H1 (cell line): ENCODE measurements at regions of chr16 and their contacts with region 1.

Region 1: GRCh38 chr16:52068447-52069074 is 478.4 kb downstream of the TOX3 start:
- DNase-seq: peak; percentile 3 to 53
- H3K4me3 ChIP-seq: no peak overlapping the region
- H3K27ac ChIP-seq: no peak overlapping the region
- H3K4me1 ChIP-seq: no peaks in the 10 kb centered on the region
- H3K27me3 ChIP-seq: no peaks in the 10 kb centered on the region
- CTCF ChIP-seq: peak; percentile 15 to 66 (median 66)
- EP300 ChIP-seq: 0 out of 3 replicates have a peak, but pooled peaks of 1 of the 2 experiments have one; percentile 26
- POLR2A ChIP-seq: no peak
- RAD21 ChIP-seq: peak; percentile 94

Region 2: GRCh38 chr16:52078716-52079655 is 10.4 kb after region 1 on chr16:
- CTCF ChIA-PET with region 1: interaction called, 11 read pairs
- POLR2A ChIA-PET with region 1: no interaction called
- DNase-seq: no peak
- H3K4me3 ChIP-seq: no peak overlapping the region
- H3K27ac ChIP-seq: no peak overlapping the region
- H3K4me1 ChIP-seq: no peaks in the 10 kb centered on the region
- H3K27me3 ChIP-seq: no peaks in the 10 kb centered on the region
- CTCF ChIP-seq: no peak
- EP300 ChIP-seq: no peak
- POLR2A ChIP-seq: no peak
- RAD21 ChIP-seq: no peak

Region 3: GRCh38 chr16:52191531-52192134 is 123.1 kb after region 1 on chr16:
- CTCF ChIA-PET with region 1: interaction called, 14 read pairs
- POLR2A ChIA-PET with region 1: no interaction called
- DNase-seq: peak; percentile 33 to 84
- H3K4me3 ChIP-seq: no peak overlapping the region
- H3K27ac ChIP-seq: no peak overlapping the region
- H3K4me1 ChIP-seq: peaks cover 0 to 3% (median 0%) of the 10 kb centered on the region in 4 experiments; a peak in 1 of 7 replicates
- H3K27me3 ChIP-seq: no peaks in the 10 kb centered on the region
- CTCF ChIP-seq: peak; percentile 71 to 92 (median 85)
- EP300 ChIP-seq: no peak
- POLR2A ChIP-seq: no peak
- RAD21 ChIP-seq: peak; percentile 96 to 98

Region 4: DNA sequence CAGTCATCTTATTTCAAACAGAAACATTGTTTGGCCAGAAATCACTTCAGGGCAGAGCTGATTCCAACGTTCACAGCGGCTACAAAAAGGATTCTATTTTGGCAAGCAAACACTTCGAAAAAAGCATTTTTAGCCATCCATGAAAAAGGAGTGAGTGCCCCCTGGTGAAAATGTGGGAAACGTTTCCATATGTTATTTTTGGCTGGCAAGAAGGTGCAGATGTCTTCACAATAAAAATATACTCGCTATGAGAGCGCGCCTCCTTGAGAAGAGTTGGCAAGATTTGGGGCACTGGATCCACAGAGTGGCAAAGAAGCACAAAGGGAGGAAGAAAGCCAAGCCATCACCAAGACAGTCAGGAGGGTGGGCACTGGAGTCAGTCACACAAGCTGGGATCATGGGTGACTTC is 793.1 kb after region 1 on chr16:
- CTCF ChIA-PET with region 1: interaction called, 41 read pairs
- POLR2A ChIA-PET with region 1: no interaction called
- DNase-seq: peak; percentile 3 to 51
- H3K4me3 ChIP-seq: no peak overlapping the region
- H3K27ac ChIP-seq: no peak overlapping the region
- H3K4me1 ChIP-seq: peaks cover 0 to 3% (median 0%) of the 10 kb centered on the region in 4 experiments; a peak in 1 of 7 replicates
- H3K27me3 ChIP-seq: no peaks in the 10 kb centered on the region
- CTCF ChIP-seq: peak in 2 of 3 experiments; percentile 53 to 61; a peak in 3 of 4 replicates
- EP300 ChIP-seq: no peak
- POLR2A ChIP-seq: no peak
- RAD21 ChIP-seq: peak; percentile 86 to 90

Region 5: DNA sequence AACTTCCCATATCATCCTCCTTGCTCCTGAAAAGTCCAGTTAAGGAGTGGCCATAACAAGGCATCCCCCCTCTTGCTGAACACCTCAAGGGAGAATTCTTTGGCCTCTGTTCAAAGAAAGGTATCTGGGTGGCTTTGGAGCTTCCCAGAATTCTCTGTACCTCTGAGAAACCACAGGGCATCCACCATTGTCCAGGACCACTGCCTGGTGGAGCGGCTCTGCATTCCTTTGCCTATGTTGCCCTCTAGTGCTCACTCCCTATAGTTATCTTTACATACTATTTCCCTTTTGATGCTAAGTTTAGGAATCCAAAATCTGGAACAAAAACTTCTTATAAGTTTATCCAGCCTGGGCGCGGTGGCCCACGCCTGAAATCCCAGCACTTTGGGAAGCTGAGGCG is 953.8 kb after region 1 on chr16:
- CTCF ChIA-PET with region 1: interaction called, 47 read pairs
- POLR2A ChIA-PET with region 1: no interaction called
- DNase-seq: peak in 1 of 2 experiments; percentile 55
- H3K4me3 ChIP-seq: no peak overlapping the region
- H3K27ac ChIP-seq: no peak overlapping the region
- H3K4me1 ChIP-seq: no peaks in the 10 kb centered on the region
- H3K27me3 ChIP-seq: no peaks in the 10 kb centered on the region
- CTCF ChIP-seq: peak; percentile 52 to 73 (median 70)
- EP300 ChIP-seq: no peak
- POLR2A ChIP-seq: no peak
- RAD21 ChIP-seq: peak; percentile 97 to 98